ENCODE measurements at regions of chr3 and their contacts with region 1.

Region 1: GRCh38 chr3:40780925-40781406 is 256.2 kb downstream of the ZNF621 start:
- DNase-seq: no peak
- H3K4me3 ChIP-seq: no peak overlapping the region
- H3K27ac ChIP-seq: no peak overlapping the region
- H3K4me1 ChIP-seq: peaks cover 0 to 6% (median 0%) of the 10 kb centered on the region in 4 experiments; a peak in 2 of 7 replicates
- H3K27me3 ChIP-seq: no peaks in the 10 kb centered on the region
- CTCF ChIP-seq: no peak
- EP300 ChIP-seq: no peak
- POLR2A ChIP-seq: no peak
- RAD21 ChIP-seq: no peak

Region 2: DNA sequence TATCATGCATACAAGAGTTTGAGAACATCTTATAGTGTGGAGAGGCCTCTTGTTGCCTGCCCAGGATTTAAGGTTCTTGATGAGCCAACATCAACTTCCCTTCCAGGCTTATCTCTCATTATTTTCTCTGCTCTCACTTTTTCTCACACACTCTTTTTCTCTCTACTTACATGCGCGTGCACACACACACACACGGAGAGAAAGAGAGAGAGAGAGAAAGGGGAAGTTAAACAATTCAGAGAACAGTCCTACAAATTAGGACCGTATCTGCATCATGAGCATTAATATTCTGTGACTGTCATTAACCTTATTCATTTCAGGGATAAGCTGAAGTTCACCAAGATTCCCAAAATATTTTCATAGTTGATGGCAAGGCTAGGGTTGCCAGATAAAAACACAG is 12.8 kb after region 1 on chr3:
- CTCF ChIA-PET with region 1: interaction called, 18 read pairs
- POLR2A ChIA-PET with region 1: no interaction called
- DNase-seq: no peak
- H3K4me3 ChIP-seq: no peak overlapping the region
- H3K27ac ChIP-seq: no peak overlapping the region
- H3K4me1 ChIP-seq: no peaks in the 10 kb centered on the region
- H3K27me3 ChIP-seq: no peaks in the 10 kb centered on the region
- CTCF ChIP-seq: no peak
- EP300 ChIP-seq: no peak
- POLR2A ChIP-seq: no peak
- RAD21 ChIP-seq: no peak

Region 3: DNA sequence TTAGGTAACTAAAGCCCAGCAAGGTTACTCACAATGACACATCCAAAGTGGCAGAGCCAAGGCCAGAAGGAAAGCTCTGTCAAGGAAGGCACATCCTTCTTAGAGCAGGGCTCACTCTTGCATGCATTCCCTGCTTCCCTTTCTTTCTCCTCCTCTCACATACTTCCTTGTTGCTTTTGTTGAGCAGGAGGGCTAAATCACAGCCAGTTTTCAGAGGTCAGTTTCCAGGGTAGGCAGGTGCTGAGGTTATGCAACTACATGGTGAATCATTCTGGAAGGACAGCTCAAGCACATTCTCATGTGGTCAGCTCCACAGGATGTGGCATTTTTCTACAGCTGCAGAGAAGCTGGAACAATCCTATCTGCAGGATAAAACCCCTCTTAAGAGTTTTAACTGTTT is 19.4 kb after region 1 on chr3:
- CTCF ChIA-PET with region 1: interaction called, 18 read pairs
- POLR2A ChIA-PET with region 1: no interaction called
- DNase-seq: peak in 1 of 2 experiments; percentile 31
- H3K4me3 ChIP-seq: no peak overlapping the region
- H3K27ac ChIP-seq: no peak overlapping the region
- H3K4me1 ChIP-seq: peaks cover 0 to 2% (median 0%) of the 10 kb centered on the region in 4 experiments; a peak in 1 of 7 replicates
- H3K27me3 ChIP-seq: no peaks in the 10 kb centered on the region
- CTCF ChIP-seq: no peak
- EP300 ChIP-seq: no peak
- POLR2A ChIP-seq: no peak
- RAD21 ChIP-seq: no peak